Endothelial cell of umbilical vein (primary cell): ENCODE measurements at regions of chr17 and their contacts with region 1.

Region 1: GRCh38 chr17:27155866-27156265 is 138.0 kb upstream of the WSB1 start:
- DNase-seq: no peak
- H3K4me3 ChIP-seq: no peak overlapping the region
- H3K27ac ChIP-seq: no peak overlapping the region
- H3K4me1 ChIP-seq: no peaks in the 10 kb centered on the region
- H3K27me3 ChIP-seq: no peaks in the 10 kb centered on the region
- CTCF ChIP-seq: no peak
- POLR2A ChIP-seq: no peak

Region 2: DNA sequence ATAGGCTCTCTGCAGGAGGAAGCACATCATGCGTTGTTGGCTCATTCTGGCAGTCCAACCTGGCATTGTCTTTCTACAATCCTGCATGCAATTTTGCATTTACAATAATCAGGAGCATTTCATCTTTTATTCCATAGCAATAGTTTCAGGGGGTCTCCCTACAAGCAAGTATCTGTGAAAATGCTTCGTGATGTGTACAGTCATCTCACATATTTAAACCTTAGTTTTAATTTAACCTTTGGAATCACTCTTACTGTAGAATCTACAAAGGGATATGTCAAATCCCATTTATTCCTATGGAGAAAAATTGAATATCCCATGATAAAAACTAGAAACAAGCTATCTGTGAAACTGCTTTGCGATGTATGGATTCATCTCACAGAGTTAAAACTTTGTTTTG is 26.1 kb after region 1 on chr17:
- CTCF ChIA-PET with region 1: no interaction called
- POLR2A ChIA-PET with region 1: no interaction called
- dilution Hi-C with region 1: no loop called
- intact Hi-C with region 1: no loop called
- DNase-seq: no peak
- H3K4me3 ChIP-seq: no peak overlapping the region
- H3K27ac ChIP-seq: no peak overlapping the region
- H3K4me1 ChIP-seq: no peaks in the 10 kb centered on the region
- H3K27me3 ChIP-seq: no peaks in the 10 kb centered on the region
- CTCF ChIP-seq: no peak
- POLR2A ChIP-seq: no peak

Region 3: DNA sequence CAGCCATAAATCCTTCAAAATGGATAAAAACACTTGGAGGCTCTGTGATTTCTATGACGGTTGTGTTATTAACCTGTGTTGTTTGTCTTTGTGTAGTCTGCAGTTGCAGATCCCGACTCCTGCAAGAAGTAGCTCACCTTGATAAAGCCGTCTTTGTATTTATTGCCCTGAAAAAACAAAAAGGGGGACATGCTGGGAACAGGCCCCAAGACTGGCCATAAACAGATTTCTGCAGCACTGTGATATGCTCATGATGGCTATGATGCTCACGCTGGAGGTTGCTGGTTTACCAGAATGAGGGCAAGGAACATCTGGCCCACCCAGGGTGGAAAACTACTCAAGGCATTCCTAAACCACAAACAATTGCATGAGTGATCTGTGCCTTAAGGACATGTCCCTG is 546.1 kb after region 1 on chr17:
- CTCF ChIA-PET with region 1: no interaction called
- POLR2A ChIA-PET with region 1: no interaction called
- dilution Hi-C with region 1: no loop called
- intact Hi-C with region 1: loop called (anchors 5 kb)
- DNase-seq: no peak
- H3K4me3 ChIP-seq: no peak overlapping the region
- H3K27ac ChIP-seq: no peak overlapping the region
- H3K4me1 ChIP-seq: no peaks in the 10 kb centered on the region
- H3K27me3 ChIP-seq: no peaks in the 10 kb centered on the region
- CTCF ChIP-seq: no peak
- POLR2A ChIP-seq: no peak